ENCODE measurements at regions of chrX and their contacts with region 1.

Region 1: DNA sequence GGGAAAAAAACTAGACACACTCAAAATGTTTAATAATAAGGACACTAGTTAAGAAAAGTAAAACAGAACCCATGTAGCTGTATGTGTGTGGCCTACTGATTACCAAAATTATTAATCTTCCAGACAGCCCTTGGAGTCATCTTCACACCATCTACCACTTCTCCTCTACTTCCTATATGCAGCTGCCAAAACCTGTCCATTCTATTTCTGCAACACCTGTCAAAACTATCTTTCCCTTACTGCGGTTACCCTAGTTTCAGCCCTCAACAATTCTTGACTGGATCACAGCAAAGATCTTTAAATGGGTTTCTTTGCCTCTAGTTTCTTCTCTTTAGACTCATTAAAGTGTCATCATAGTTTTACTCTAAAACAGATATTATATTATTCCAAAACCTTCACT is 72.6 kb downstream of the GPR82 start:
- DNase-seq: no peak
- ATAC-seq: no peak
- H3K4me3 Mint-ChIP-seq: no peak overlapping the region
- H3K27ac Mint-ChIP-seq: no peak overlapping the region
- H3K4me1 Mint-ChIP-seq: peaks cover 32% of the 10 kb centered on the region
- H3K27me3 Mint-ChIP-seq: no peaks in the 10 kb centered on the region
- CTCF ChIP-seq: no peak

Region 2: DNA sequence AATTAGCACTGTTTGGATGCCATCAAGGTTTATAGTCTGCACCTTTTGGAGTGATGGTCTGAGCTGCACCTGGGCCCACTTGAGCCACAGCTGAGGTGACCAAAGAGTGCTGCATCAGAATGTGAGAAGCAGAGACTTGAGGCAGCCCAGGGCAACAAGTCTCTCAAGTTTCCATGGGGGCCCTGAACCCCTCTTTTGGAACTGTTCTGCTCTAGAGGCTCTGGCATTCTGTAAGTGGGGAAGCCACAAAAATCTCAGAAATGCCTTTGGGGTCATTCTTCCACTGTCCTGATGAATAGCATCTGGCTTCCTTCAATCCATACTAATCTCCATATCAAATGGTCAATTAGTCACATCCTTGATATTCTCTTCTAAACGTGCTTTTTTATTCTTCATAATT is 1561.2 kb after region 1 on chrX:
- CTCF ChIA-PET with region 1: no interaction called
- POLR2A ChIA-PET with region 1: no interaction called
- intact Hi-C with region 1: loop called (anchors 10 kb)
- DNase-seq: no peak
- ATAC-seq: no peak
- H3K4me3 Mint-ChIP-seq: no peak overlapping the region
- H3K27ac Mint-ChIP-seq: no peak overlapping the region
- H3K4me1 Mint-ChIP-seq: no peaks in the 10 kb centered on the region
- H3K27me3 Mint-ChIP-seq: no peaks in the 10 kb centered on the region
- CTCF ChIP-seq: no peak